ENCODE measurements at regions of chr3 and their contacts with region 1.

Region 1: DNA sequence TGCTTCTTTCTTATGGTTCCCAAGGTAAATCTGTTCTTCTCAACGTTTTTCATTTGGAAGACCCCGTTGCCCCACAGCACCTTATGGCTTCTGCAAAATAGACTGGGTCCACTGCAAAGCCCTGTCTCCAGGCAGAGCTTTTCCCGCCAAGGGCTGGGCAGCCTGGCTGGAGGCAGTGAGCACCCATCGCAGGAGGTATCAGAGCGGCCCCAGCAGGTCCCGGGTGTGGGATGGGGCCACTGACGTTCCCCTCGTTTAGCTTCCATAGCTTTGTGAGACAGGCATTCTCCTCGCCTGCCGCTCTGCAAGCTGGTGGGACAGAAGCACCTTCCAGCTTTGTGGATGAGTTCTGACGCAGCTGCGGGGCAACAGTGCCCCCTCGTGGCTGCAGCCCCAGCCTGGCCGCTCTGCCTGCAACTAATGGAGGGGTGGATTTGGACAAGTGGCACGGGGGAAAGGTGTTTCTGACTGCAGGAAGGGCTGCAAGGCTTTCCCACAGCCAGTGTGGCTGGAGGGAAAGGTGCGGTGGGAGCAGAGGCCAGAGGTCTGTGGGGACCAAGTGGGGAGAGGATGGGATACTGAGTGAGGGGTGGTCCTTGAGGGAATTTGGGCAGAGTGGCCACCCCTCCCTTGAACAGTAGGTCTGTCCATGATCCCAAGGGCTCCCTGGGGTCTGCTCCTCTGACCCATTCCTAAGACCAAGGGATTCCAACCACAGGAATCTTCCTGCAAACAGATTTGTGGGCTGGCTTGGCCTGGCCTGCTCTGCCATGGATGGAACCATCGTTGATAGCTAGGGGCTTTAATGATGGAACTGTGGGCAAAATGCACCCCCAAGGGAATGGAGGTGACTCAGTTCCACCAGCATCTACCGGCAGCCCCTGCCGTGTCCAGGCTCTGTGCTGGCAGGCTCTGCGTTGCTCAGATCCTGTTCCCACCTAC is 99.4 kb downstream of the FBLN2 start:
- DNase-seq: peak; percentile 81 to 86
- ATAC-seq: peak; percentile 70 to 91 (median 86)
- H3K4me3 ChIP-seq: no peak overlapping the region
- H3K27ac ChIP-seq: no peak overlapping the region
- H3K4me1 ChIP-seq: peaks cover 0 to 21% (median 14%) of the 10 kb centered on the region in 9 donors
- H3K27me3 ChIP-seq: peaks cover 0 to 23% (median 12%) of the 10 kb centered on the region in 7 donors
- CTCF ChIP-seq: peak; percentile 94 to 99 (median 97)

Region 2: GRCh38 chr3:12868039-12869034 is 780.0 kb before region 1 on chr3:
- intact Hi-C with region 1: loop called in 1 of 10 experiments (anchors 10 kb)
- DNase-seq: peak; percentile 83 to 85
- ATAC-seq: peak; percentile 86 to 95 (median 94)
- H3K4me3 ChIP-seq: peak overlapping the region in 8 of 10 donors; percentile 14 to 42 (median 32)
- H3K27ac ChIP-seq: no peak overlapping the region
- H3K4me1 ChIP-seq: peaks cover 0 to 15% (median 11%) of the 10 kb centered on the region in 9 donors
- H3K27me3 ChIP-seq: peaks cover 0 to 16% (median 0%) of the 10 kb centered on the region in 7 donors
- CTCF ChIP-seq: peak; percentile 87 to 97 (median 92)

Region 3: DNA sequence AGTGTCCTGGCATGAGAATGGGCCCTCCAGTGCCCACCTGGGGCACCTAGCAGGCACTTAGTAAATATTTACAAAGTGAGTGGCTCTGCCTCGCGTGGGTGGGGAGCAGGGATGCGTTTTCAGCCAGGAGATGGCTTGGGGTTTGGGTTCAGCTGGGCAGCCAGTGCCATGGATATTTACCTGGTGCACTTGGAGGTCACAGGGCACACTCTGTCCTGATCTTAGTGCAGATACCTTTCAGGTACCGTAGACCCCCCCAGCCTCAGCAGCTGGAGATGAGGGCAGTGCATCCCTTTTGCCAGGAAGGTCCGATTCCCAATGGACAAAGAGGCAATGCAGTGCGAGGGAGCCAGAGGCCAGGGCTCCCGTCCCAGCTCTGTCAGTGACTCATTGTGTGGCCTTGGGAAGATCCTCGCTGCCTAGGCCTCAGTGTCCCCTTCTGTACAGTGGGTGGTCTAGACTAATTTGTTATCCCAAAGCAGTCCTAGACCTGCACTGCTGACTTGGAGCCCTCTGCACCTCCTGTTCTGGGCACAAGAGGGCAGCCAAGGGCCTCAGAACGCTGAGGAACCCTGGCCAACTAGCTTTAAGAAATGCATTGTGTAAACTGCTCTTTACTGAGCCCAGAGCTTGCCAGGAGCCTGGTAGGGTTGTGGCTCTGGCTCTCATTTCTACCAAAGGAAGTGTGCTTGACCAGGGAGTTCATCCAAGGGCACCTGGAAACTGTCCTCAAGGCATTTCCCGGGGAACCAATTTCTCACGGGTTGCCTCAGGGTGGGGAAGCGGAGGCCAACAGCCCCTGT is 152.2 kb before region 1 on chr3:
- intact Hi-C with region 1: loop called (anchors 1 to 2 kb)
- DNase-seq: peak; percentile 76 to 79
- ATAC-seq: peak; percentile 84 to 92 (median 90)
- H3K4me3 ChIP-seq: no peak overlapping the region
- H3K27ac ChIP-seq: no peak overlapping the region
- H3K4me1 ChIP-seq: peaks cover 3 to 20% (median 9%) of the 10 kb centered on the region in 9 donors
- H3K27me3 ChIP-seq: no peaks in the 10 kb centered on the region
- CTCF ChIP-seq: peak; percentile 83 to 96 (median 93)

Region 4: DNA sequence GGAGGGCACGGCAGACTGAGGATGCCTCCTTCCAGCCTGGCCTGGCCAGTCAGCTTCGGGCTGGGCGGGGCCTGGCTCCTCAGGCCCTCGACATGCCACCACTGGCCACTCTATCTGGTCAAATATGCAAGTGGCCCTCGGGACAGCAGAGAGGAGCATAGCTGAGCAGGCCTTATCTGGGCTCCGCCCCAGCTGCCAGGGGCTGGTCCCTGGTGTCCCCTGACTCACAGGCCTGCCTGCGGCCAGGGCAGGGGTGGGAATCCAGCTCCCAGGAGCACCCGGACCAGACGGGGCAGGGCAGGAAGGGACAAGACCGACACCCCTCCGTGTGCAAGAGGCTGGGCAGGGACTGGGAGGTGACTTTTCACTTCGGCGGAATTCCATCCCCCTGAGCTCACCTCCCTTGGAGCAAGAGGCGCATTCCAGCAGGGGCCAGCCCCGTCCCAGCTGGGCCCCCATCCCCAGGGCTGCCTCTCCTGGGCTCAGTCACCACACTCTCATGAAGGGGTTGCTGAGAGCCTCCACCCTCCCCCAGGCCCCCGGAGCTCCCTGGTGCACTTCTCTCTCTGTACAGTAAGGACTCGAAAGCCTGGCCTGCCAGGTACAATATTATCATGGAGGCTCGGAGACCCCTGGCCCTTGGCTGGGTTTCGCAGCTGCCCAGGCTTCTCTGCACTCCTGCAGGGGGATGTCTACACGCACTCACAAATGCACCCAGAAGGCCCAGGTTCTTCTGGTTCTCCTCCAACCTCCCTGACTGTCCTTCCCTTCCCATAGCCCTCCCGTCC is 202.0 kb after region 1 on chr3:
- intact Hi-C with region 1: no loop called
- DNase-seq: no peak
- ATAC-seq: peak in 5 of 8 donors; percentile 38 to 55 (median 48)
- H3K4me3 ChIP-seq: no peak overlapping the region
- H3K27ac ChIP-seq: no peak overlapping the region
- H3K4me1 ChIP-seq: no peaks in the 10 kb centered on the region
- H3K27me3 ChIP-seq: peaks cover 0 to 60% (median 42%) of the 10 kb centered on the region in 7 donors
- CTCF ChIP-seq: no peak

Region 5: DNA sequence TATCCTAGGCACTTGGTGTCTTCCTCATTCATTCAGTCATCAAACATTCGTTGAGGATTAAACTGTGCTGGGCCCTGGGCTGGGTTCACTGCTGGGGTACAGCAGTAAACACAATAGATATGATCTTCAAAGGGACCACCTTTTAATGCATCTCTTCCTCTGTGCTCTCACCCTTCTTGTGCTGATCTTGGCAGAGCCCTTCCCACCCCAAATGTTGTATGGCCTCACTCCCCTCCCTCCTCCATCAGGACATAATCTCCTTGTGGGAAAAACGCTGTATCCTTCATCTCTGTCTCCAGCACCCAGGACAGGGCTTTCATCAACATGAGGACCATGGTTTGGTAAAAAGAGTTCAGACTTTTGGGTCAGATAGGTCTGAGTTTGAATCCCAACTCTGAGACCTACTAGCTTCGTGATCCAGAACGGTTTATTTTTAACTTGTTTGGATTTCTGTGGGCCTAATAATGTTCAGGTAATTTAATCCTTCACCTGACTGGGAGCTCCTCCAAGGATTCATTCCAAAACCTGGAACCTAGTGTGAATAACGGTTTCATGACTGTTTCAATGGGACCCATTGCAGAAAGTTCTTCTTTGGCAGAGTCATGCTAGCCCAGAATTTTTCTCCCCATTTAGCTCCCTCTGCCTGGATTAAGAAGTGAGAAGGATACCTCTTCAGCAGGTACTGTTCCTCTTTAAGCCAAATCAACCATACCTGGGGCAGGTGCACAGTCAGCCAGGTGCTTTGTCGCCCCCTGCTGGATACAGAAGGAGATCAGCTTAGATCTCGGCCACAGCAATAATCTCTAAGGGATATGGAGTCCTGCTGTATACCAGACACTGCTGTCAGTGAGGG is 236.7 kb after region 1 on chr3:
- intact Hi-C with region 1: loop called in 1 of 10 experiments (anchors 10 kb)
- DNase-seq: no peak
- ATAC-seq: no peak
- H3K4me3 ChIP-seq: no peak overlapping the region
- H3K27ac ChIP-seq: no peak overlapping the region
- H3K4me1 ChIP-seq: peaks cover 0 to 9% (median 7%) of the 10 kb centered on the region in 9 donors
- H3K27me3 ChIP-seq: peaks cover 9 to 66% (median 52%) of the 10 kb centered on the region in 7 donors
- CTCF ChIP-seq: peak in 8 of 9 donors; percentile 6 to 60 (median 44)

Region 6: GRCh38 chr3:14461748-14462324 is 813.5 kb after region 1 on chr3:
- intact Hi-C with region 1: loop called in 1 of 10 experiments (anchors 10 kb)
- DNase-seq: peak; percentile 51 to 59
- ATAC-seq: peak in 6 of 8 donors; percentile 35 to 74 (median 60)
- H3K4me3 ChIP-seq: no peak overlapping the region
- H3K27ac ChIP-seq: no peak overlapping the region
- H3K4me1 ChIP-seq: peaks cover 2 to 42% (median 25%) of the 10 kb centered on the region in 9 donors
- H3K27me3 ChIP-seq: peaks cover 0 to 37% (median 4%) of the 10 kb centered on the region in 7 donors
- CTCF ChIP-seq: peak in 8 of 9 donors; percentile 22 to 72 (median 55)

Measured in heart right ventricle (tissue), 16 donors.